Activated CD4-positive, alpha-beta T cell treated with anti-CD3 and anti-CD28 coated beads, Interleukin-2, amount 10 ng/mL, durations not matched to agents 24 days and 14 days (primary cell): ENCODE measurements at regions of chr5 and their contacts with region 1.

Region 1: DNA sequence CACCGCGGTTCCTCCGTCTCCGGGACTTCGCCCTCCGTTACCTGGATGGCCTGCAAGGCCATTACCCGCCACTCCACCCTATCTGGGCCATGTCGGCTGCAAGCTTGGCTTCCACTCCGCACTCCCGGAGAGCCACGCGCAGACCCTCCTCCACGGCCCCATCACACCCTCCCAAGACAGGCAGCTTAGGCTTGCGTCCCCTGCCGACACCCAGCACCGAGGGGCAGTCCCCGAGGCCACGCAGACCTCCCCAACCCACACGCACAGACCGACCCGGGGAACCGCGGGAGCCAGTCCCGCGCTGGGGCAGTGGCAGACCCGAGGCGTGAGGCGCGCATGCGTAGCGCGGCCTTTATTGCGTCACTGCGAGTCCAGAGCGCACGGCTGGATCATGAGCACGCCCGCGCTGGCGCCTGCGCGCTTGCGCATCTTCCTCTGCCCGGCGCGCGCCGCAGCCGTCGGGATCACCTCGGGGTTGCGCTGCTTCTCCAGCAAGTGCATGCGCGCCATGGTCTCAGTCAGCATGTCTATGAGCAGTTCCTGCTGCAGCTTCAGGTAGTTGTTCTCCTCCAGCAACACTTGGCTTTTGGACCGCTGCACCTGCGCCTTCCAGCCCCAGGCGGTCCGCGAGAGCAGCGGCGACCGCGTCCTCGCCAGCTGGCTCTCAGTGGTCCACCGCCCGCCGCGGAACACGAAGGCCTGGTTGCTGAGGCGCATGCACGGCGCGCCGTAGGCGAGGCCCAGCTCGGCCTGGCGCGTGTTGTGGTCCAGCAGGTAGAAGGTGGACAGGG is 2.4 kb downstream of the CBY3 start:
- DNase-seq: peak; percentile 98
- H3K4me3 Mint-ChIP-seq: peak overlapping the region; percentile 100
- H3K27ac Mint-ChIP-seq: peak overlapping the region; percentile 99
- H3K4me1 Mint-ChIP-seq: peaks cover 31% of the 10 kb centered on the region
- H3K27me3 Mint-ChIP-seq: no peaks in the 10 kb centered on the region

Region 2: GRCh38 chr5:179795863-179796833 is 117.7 kb after region 1 on chr5:
- intact Hi-C with region 1: loop called (anchors 5 kb)
- DNase-seq: peak; percentile 92
- H3K4me3 Mint-ChIP-seq: peak overlapping the region; percentile 73
- H3K27ac Mint-ChIP-seq: peak overlapping the region; percentile 71
- H3K4me1 Mint-ChIP-seq: peaks cover 14% of the 10 kb centered on the region
- H3K27me3 Mint-ChIP-seq: no peaks in the 10 kb centered on the region